CD4-positive, alpha-beta T cell (primary cell): ENCODE measurements at regions of chr3 and their contacts with region 1.

Region 1: DNA sequence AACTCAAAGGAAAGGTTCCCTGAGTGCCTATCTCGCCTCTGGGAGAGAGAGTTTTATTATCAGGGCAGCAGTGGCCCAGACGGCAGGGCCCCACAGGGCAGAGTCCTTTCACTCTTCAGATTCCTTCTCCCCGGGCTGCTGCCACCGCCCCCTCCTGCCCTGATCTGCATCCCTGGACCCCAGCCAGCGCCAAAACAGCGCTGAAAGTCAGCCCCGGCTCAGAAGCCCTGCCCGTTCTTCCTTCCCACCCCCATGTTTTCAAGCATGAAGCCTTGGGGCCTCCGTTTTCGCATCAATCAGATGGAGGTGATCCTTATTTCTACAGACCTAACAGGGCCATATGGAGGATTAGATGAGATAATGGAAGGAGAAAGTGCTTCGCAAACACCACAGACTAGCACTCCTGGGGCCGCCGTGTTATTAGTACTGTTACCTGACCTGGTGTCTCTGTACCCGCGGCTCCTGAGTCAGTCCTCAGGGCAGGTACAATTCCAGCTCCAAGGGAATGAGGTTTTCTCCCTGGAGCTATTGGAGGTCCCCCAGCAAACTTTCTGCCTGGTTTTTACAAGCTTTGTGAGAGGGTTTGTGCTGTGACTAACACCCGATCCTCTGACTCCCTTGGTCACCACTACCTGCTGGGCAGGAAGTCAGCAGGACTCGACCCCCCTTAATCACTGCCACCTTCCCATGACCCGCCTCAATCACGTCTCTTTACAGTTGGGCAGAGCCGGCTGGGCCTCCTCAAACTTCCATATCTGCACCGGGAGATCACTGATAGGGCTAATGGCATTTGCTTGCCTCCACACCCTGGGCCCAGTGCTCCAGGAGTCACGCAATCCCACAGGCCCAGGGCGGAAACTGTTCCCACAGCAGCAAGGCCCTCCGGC is 39.5 kb upstream of the TSEN2 start:
- DNase-seq: no peak
- ATAC-seq: no peak
- H3K4me3 ChIP-seq: no peak overlapping the region
- H3K4me3 Mint-ChIP-seq: no peak overlapping the region
- H3K27ac ChIP-seq: no peak overlapping the region
- H3K27ac Mint-ChIP-seq: no peak overlapping the region
- H3K4me1 ChIP-seq: no peaks in the 10 kb centered on the region
- H3K4me1 Mint-ChIP-seq: no peaks in the 10 kb centered on the region
- H3K27me3 ChIP-seq: no peaks in the 10 kb centered on the region
- H3K27me3 Mint-ChIP-seq: no peaks in the 10 kb centered on the region
- CTCF ChIP-seq: no peak

Region 2: GRCh38 chr3:12312010-12312409 is 132.8 kb before region 1 on chr3:
- CTCF ChIA-PET with region 1: no interaction called
- POLR2A ChIA-PET with region 1: no interaction called
- intact Hi-C with region 1: loop called in 1 of 2 experiments (anchors 5 kb)
- DNase-seq: no peak
- ATAC-seq: no peak
- H3K4me3 ChIP-seq: no peak overlapping the region
- H3K4me3 Mint-ChIP-seq: no peak overlapping the region
- H3K27ac ChIP-seq: no peak overlapping the region
- H3K27ac Mint-ChIP-seq: no peak overlapping the region
- H3K4me1 ChIP-seq: no peaks in the 10 kb centered on the region
- H3K4me1 Mint-ChIP-seq: no peaks in the 10 kb centered on the region
- H3K27me3 ChIP-seq: no peaks in the 10 kb centered on the region
- H3K27me3 Mint-ChIP-seq: peaks cover 8% of the 10 kb centered on the region
- CTCF ChIP-seq: no peak

Region 3: DNA sequence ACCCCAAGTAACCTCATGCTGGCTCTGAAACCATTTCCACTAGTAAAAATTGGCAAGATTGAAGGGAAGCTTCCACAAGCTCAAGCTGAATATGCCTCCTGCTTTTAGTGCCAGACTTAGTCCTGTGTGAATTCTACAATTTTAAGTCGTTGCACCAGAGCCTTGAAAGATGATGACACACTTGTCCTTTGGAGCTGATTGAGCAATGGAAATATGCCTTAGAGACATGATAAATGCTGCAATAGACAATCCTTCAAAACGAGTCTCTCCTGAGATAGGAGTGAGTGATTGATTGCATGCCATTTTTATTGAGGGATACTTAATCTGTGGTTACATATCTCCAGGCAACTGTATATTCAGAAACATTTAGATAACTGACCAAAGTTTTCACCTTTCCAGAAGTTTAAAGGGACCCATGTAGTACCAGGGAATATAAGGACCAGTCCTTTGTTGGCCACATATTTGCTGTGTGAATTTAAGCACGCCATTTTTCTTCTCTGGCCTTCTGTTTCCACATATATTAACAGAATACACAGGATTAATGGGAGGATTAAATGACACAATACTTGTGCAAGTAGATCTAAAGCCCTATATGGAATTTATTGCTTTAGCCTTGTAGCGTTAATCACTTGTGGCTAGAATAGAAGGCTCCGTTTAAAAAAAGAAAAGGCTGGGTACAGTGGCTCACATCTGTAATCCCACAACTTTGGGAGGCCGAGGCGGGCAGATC is 90.9 kb before region 1 on chr3:
- CTCF ChIA-PET with region 1: no interaction called
- POLR2A ChIA-PET with region 1: no interaction called
- intact Hi-C with region 1: no loop called
- DNase-seq: peak in 2 of 14 experiments; percentile 30 to 31
- ATAC-seq: no peak
- H3K4me3 ChIP-seq: no peak overlapping the region
- H3K4me3 Mint-ChIP-seq: no peak overlapping the region
- H3K27ac ChIP-seq: no peak overlapping the region
- H3K27ac Mint-ChIP-seq: no peak overlapping the region
- H3K4me1 ChIP-seq: no peaks in the 10 kb centered on the region
- H3K4me1 Mint-ChIP-seq: no peaks in the 10 kb centered on the region
- H3K27me3 ChIP-seq: no peaks in the 10 kb centered on the region
- H3K27me3 Mint-ChIP-seq: peaks cover 5% of the 10 kb centered on the region
- CTCF ChIP-seq: no peak

Region 4: GRCh38 chr3:12370758-12371157 is 74.1 kb before region 1 on chr3:
- CTCF ChIA-PET with region 1: no interaction called
- POLR2A ChIA-PET with region 1: no interaction called
- intact Hi-C with region 1: no loop called
- DNase-seq: no peak
- ATAC-seq: no peak
- H3K4me3 ChIP-seq: no peak overlapping the region
- H3K4me3 Mint-ChIP-seq: no peak overlapping the region
- H3K27ac ChIP-seq: no peak overlapping the region
- H3K27ac Mint-ChIP-seq: no peak overlapping the region
- H3K4me1 ChIP-seq: no peaks in the 10 kb centered on the region
- H3K4me1 Mint-ChIP-seq: no peaks in the 10 kb centered on the region
- H3K27me3 ChIP-seq: no peaks in the 10 kb centered on the region
- H3K27me3 Mint-ChIP-seq: peaks cover 6% of the 10 kb centered on the region
- CTCF ChIP-seq: no peak

Region 5: GRCh38 chr3:12405432-12406272 is 39.2 kb before region 1 on chr3:
- CTCF ChIA-PET with region 1: no interaction called
- POLR2A ChIA-PET with region 1: no interaction called
- intact Hi-C with region 1: no loop called
- DNase-seq: peak in 2 of 14 experiments; percentile 50 to 59
- ATAC-seq: no peak
- H3K4me3 ChIP-seq: no peak overlapping the region
- H3K4me3 Mint-ChIP-seq: no peak overlapping the region
- H3K27ac ChIP-seq: no peak overlapping the region
- H3K27ac Mint-ChIP-seq: no peak overlapping the region
- H3K4me1 ChIP-seq: no peaks in the 10 kb centered on the region
- H3K4me1 Mint-ChIP-seq: no peaks in the 10 kb centered on the region
- H3K27me3 ChIP-seq: no peaks in the 10 kb centered on the region
- H3K27me3 Mint-ChIP-seq: no peaks in the 10 kb centered on the region
- CTCF ChIP-seq: no peak

Region 6: DNA sequence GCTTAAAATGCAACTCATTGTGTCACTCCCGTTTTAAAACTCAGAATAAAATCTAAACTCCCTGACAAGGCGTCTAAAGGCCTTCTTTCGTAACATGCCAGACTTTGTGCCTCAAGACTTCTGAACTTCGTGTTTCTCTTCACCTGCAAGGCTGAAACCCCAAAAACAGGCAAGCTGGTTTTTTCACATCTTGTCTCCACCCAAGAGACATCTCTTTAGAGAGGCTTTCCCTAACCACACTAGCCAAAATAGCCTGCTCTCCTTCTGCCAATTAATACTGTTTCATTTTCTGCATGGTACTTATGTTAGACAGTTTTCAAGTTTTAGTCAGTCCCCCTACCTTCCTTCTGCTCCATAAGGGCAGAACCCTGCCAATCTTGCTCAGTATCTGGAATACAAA is 177.5 kb after region 1 on chr3:
- CTCF ChIA-PET with region 1: no interaction called
- POLR2A ChIA-PET with region 1: no interaction called
- intact Hi-C with region 1: no loop called
- DNase-seq: no peak
- ATAC-seq: no peak
- H3K4me3 ChIP-seq: no peak overlapping the region
- H3K4me3 Mint-ChIP-seq: no peak overlapping the region
- H3K27ac ChIP-seq: no peak overlapping the region
- H3K27ac Mint-ChIP-seq: peak overlapping the region; percentile 65
- H3K4me1 ChIP-seq: peaks cover 32% of the 10 kb centered on the region
- H3K4me1 Mint-ChIP-seq: peaks cover 61% of the 10 kb centered on the region
- H3K27me3 ChIP-seq: no peaks in the 10 kb centered on the region
- H3K27me3 Mint-ChIP-seq: no peaks in the 10 kb centered on the region
- CTCF ChIP-seq: no peak